ENCODE measurements at regions of chr14 and their contacts with region 1.

Region 1: GRCh38 chr14:80850197-80850814 is 91.2 kb downstream of the CEP128 start:
- DNase-seq: peak; percentile 63
- H3K4me3 ChIP-seq: no peak overlapping the region
- H3K27ac ChIP-seq: no peak overlapping the region
- H3K4me1 ChIP-seq: no peaks in the 10 kb centered on the region
- H3K27me3 ChIP-seq: no peaks in the 10 kb centered on the region
- CTCF ChIP-seq: peak; percentile 22 to 23
- POLR2A ChIP-seq: no peak

Region 2: GRCh38 chr14:78933948-78934524 is 1916.3 kb before region 1 on chr14:
- CTCF ChIA-PET with region 1: interaction called, 71 read pairs
- POLR2A ChIA-PET with region 1: no interaction called
- dilution Hi-C with region 1: no loop called
- intact Hi-C with region 1: loop called (anchors 1 kb)
- DNase-seq: peak; percentile 54
- H3K4me3 ChIP-seq: no peak overlapping the region
- H3K27ac ChIP-seq: no peak overlapping the region
- H3K4me1 ChIP-seq: peaks cover 8% of the 10 kb centered on the region
- H3K27me3 ChIP-seq: no peaks in the 10 kb centered on the region
- CTCF ChIP-seq: peak; percentile 37 to 42
- POLR2A ChIP-seq: no peak

Region 3: DNA sequence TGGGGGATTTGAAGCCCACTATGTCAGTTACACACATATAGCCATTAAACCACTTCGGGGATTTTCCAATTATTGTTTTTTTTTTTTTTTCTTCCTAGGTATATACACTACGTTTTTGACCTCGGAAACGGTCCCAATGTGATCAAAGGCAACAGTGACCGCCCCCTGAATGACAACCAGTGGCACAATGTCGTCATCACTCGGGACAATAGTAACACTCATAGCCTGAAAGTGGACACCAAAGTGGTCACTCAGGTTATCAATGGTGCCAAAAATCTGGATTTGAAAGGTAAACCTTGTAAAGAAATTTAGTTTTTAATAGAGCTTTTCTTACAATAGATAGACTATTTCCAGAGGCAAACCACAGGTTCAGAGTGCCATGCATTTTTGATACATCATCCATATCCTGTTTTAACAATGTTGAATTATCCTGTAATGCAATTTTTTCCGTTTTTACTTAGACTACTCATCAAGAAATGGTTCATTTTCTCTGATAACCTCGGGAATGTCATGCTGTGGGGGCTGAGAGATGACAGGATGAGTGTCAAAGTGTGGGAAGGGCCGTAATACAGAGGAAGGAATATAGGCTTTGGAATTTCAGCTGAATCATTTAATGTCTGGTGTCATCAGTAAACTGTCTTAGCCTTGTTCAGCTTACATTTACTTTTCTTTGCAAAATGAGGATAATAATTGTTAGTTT is 1883.0 kb before region 1 on chr14:
- CTCF ChIA-PET with region 1: interaction called, 15 read pairs
- POLR2A ChIA-PET with region 1: no interaction called
- dilution Hi-C with region 1: no loop called
- intact Hi-C with region 1: loop called (anchors 1 kb)
- DNase-seq: peak; percentile 56
- H3K4me3 ChIP-seq: no peak overlapping the region
- H3K27ac ChIP-seq: peak overlapping the region; percentile 60
- H3K4me1 ChIP-seq: peaks cover 33% of the 10 kb centered on the region
- H3K27me3 ChIP-seq: no peaks in the 10 kb centered on the region
- CTCF ChIP-seq: no peak
- POLR2A ChIP-seq: no peak

Region 4: DNA sequence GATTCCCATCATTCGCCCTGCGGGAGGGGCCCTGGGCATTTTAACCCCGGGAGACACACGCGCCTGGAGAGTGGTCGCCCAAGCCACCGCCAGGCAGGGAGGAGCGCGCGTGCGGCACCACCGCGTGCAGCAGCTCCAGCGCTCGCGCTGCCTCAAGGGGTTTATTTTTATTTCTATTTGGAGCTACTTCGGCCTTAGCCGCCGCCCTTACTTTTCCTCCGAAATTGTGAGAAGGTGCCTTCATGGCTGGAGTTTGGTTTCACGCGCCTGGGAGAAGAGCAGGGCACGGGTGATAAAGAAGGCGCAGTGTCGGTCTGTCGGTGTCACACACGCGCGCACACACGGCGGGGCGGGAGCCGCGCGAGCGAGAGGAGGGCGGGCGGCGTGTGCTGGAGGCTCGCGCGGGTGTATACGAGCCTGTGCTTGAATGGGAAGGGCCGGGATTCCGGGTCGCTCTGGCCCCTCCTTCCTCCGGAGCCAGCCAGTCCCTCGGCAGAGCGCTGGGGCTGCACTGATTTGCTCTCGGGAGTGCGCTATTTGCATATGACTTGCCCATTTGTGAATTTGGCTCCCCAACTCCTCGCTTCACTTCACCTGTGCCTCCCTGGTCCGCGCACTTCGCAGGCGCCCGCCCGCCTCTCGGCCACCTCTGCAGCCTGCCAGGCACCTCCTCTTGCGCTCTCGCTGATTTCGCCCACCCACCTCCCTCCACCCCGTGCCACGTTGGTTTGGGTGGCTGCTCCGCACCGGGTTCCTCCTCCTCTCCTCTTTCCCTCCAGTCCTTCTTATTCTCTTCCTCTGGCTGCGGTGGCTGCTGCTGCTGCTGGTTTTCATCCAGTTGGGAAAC is 1571.3 kb before region 1 on chr14:
- CTCF ChIA-PET with region 1: no interaction called
- POLR2A ChIA-PET with region 1: no interaction called
- dilution Hi-C with region 1: no loop called
- intact Hi-C with region 1: loop called (anchors 10 kb)
- DNase-seq: peak; percentile 83
- H3K4me3 ChIP-seq: peak overlapping the region; percentile 33 to 62 (median 34)
- H3K27ac ChIP-seq: no peak overlapping the region
- H3K4me1 ChIP-seq: peaks cover 7% of the 10 kb centered on the region
- H3K27me3 ChIP-seq: peaks cover 16 to 33% of the 10 kb centered on the region in 2 experiments
- CTCF ChIP-seq: no peak
- POLR2A ChIP-seq: no peak

Region 5: GRCh38 chr14:80202888-80203562 is 647.3 kb before region 1 on chr14:
- CTCF ChIA-PET with region 1: interaction called, 21 read pairs
- POLR2A ChIA-PET with region 1: no interaction called
- dilution Hi-C with region 1: no loop called
- intact Hi-C with region 1: no loop called
- DNase-seq: no peak
- H3K4me3 ChIP-seq: no peak overlapping the region
- H3K27ac ChIP-seq: no peak overlapping the region
- H3K4me1 ChIP-seq: no peaks in the 10 kb centered on the region
- H3K27me3 ChIP-seq: no peaks in the 10 kb centered on the region
- CTCF ChIP-seq: peak; percentile 43 to 44
- POLR2A ChIP-seq: no peak

Region 6: DNA sequence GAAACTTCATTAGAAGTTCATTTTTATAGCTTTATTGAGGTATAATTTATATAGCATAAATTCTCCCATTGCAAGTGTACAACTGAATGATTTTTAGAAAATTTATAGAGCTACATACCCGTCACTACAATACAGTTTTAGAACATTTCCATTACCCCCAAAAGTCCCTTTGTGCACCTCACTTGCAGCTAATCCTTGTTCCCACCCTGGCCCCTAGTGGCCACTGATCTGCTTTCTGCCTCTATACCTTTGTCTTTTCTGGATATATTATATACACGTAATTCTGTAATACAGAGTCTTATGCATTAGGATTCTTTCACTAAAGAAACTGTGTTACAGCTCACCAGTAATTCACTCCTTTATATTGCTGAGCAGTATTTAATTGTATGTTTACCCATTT is 493.9 kb before region 1 on chr14:
- CTCF ChIA-PET with region 1: no interaction called
- POLR2A ChIA-PET with region 1: no interaction called
- dilution Hi-C with region 1: no loop called
- intact Hi-C with region 1: loop called (anchors 10 kb)
- DNase-seq: peak; percentile 27
- H3K4me3 ChIP-seq: no peak overlapping the region
- H3K27ac ChIP-seq: no peak overlapping the region
- H3K4me1 ChIP-seq: no peaks in the 10 kb centered on the region
- H3K27me3 ChIP-seq: no peaks in the 10 kb centered on the region
- CTCF ChIP-seq: peak in 1 of 2 donors; percentile 28
- POLR2A ChIP-seq: no peak

Region 7: DNA sequence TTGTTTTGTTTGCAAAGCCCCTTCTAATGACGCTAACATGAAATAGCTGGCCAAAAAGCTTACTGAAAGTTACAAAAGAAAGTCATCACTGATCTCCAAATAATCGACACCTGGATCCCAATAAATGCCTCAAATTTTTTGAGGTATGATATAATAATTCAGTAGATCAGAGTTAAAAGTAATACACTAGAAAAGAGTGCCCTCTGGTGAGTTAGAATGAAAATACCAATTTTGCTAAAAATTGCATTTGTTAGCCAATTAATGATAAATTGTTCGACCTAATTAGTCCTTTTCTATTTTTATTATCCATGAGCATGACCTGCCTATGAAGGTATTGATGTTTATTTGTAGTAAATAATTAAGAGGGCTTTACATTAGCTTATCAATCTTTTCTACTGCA is 12.7 kb after region 1 on chr14:
- CTCF ChIA-PET with region 1: interaction called, 22 read pairs
- POLR2A ChIA-PET with region 1: no interaction called
- dilution Hi-C with region 1: no loop called
- intact Hi-C with region 1: no loop called
- DNase-seq: peak; percentile 12
- H3K4me3 ChIP-seq: no peak overlapping the region
- H3K27ac ChIP-seq: no peak overlapping the region
- H3K4me1 ChIP-seq: no peaks in the 10 kb centered on the region
- H3K27me3 ChIP-seq: no peaks in the 10 kb centered on the region
- CTCF ChIP-seq: peak in 1 of 2 donors; percentile 5
- POLR2A ChIP-seq: no peak

Region 8: GRCh38 chr14:81287016-81287776 is 436.9 kb after region 1 on chr14:
- CTCF ChIA-PET with region 1: no interaction called
- POLR2A ChIA-PET with region 1: no interaction called
- dilution Hi-C with region 1: no loop called
- intact Hi-C with region 1: no loop called
- DNase-seq: no peak
- H3K4me3 ChIP-seq: no peak overlapping the region
- H3K27ac ChIP-seq: no peak overlapping the region
- H3K4me1 ChIP-seq: no peaks in the 10 kb centered on the region
- H3K27me3 ChIP-seq: no peaks in the 10 kb centered on the region
- CTCF ChIP-seq: no peak
- POLR2A ChIP-seq: no peak